ENCODE measurements at regions of chr10 and their contacts with region 1.

Region 1: GRCh38 chr10:94362360-94363250 is at the start of gene NOC3L:
- DNase-seq: peak; percentile 92 to 95 (median 93)
- H3K4me3 ChIP-seq: peak within 1 kb of the TSS; percentile 84
- H3K4me3 Mint-ChIP-seq: peak within 1 kb of the TSS; percentile 94 to 98 (median 96)
- H3K27ac ChIP-seq: peak within 1 kb of the TSS; percentile 71
- H3K27ac Mint-ChIP-seq: peak within 1 kb of the TSS; percentile 93 to 100 (median 98)
- H3K4me1 ChIP-seq: peaks cover 17% of the 10 kb centered on the region
- H3K4me1 Mint-ChIP-seq: peaks cover 32 to 52% (median 46%) of the 10 kb centered on the region in 3 donors
- H3K27me3 ChIP-seq: no peaks in the 10 kb centered on the region
- H3K27me3 Mint-ChIP-seq: peaks cover 2 to 14% of the 10 kb centered on the region in 2 donors
- total RNA-seq, gene NOC3L: 57.2 TPM

Region 2: GRCh38 chr10:93600446-93601145 is 762.0 kb before region 1 on chr10:
- CTCF ChIA-PET with region 1: no interaction called
- POLR2A ChIA-PET with region 1: no interaction called
- DNase-seq: no peak
- H3K4me3 ChIP-seq: no peak overlapping the region
- H3K4me3 Mint-ChIP-seq: no peak overlapping the region
- H3K27ac ChIP-seq: no peak overlapping the region
- H3K27ac Mint-ChIP-seq: no peak overlapping the region
- H3K4me1 ChIP-seq: no peaks in the 10 kb centered on the region
- H3K4me1 Mint-ChIP-seq: peaks cover 0 to 8% (median 0%) of the 10 kb centered on the region in 3 donors
- H3K27me3 ChIP-seq: peaks cover 7% of the 10 kb centered on the region
- H3K27me3 Mint-ChIP-seq: peaks cover 37 to 41% of the 10 kb centered on the region in 2 donors

Region 3: DNA sequence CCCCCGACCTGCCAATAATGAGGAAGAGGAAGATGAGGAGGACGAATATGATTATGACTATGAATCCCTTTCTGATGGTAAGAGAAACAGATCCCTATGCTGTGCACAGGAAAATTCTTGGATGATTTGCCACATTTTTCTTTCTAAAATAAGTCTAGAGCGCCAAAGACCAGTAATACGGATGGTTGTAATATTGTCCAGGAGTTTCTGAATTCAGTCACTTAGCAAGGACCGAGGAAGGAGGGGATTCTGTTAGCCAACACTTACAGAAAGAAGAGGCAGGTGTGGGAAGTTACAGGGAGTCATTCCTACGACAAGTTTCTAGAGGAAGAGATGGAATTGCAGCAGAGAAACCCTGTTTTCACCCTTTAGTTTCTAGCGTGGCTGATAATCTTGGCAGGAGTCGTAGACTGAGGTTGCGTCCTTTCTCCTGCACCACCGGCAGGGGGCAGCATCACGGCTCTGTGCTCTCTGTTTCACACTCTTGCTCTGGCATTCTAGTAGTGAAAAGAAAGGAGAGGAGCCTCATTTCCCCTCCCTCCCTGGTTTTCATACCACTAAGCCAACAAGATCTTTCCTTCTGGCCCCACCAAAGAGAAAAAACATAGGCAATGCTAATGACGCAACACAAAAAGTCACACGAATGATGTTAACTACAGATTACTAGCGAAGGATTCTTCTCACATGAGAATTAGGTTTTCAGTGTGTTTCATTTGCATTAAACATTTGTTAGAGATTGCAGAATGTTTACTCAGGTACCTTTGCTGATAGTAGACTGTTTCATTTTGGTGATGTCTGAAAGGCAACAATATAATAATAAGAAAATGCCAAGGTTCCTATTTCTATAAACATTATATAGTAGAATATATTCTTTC is 82.5 kb before region 1 on chr10:
- CTCF ChIA-PET with region 1: no interaction called
- POLR2A ChIA-PET with region 1: no interaction called
- DNase-seq: peak; percentile 15 to 57 (median 27)
- H3K4me3 ChIP-seq: no peak overlapping the region
- H3K4me3 Mint-ChIP-seq: no peak overlapping the region
- H3K27ac ChIP-seq: no peak overlapping the region
- H3K27ac Mint-ChIP-seq: no peak overlapping the region
- H3K4me1 ChIP-seq: no peaks in the 10 kb centered on the region
- H3K4me1 Mint-ChIP-seq: peaks cover 2 to 8% (median 8%) of the 10 kb centered on the region in 3 donors
- H3K27me3 ChIP-seq: no peaks in the 10 kb centered on the region
- H3K27me3 Mint-ChIP-seq: peaks cover 7 to 8% of the 10 kb centered on the region in 2 donors

Region 4: DNA sequence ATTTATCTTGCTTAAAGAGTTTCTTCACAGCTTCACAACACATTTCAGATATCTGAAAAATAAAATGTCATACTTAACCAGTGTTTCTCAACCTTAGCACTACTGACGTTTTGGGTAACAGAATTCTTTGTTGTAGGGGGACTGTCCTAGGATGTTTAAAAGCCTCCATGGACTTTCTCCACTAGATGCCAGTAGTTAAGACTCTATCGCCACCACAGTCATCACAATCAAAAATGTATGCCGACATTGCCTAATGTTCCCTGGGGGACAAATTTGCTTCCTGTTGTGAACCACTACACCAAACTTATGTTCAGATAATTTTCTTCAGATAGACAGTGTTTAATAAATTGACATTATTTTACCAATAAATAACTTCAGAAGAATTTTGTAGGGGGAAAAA is 13.3 kb before region 1 on chr10:
- CTCF ChIA-PET with region 1: interaction called, 10 read pairs
- POLR2A ChIA-PET with region 1: no interaction called
- DNase-seq: no peak
- H3K4me3 ChIP-seq: no peak overlapping the region
- H3K4me3 Mint-ChIP-seq: no peak overlapping the region
- H3K27ac ChIP-seq: no peak overlapping the region
- H3K27ac Mint-ChIP-seq: no peak overlapping the region
- H3K4me1 ChIP-seq: no peaks in the 10 kb centered on the region
- H3K4me1 Mint-ChIP-seq: peaks cover 0 to 2% (median 0%) of the 10 kb centered on the region in 3 donors
- H3K27me3 ChIP-seq: no peaks in the 10 kb centered on the region
- H3K27me3 Mint-ChIP-seq: no peaks in the 10 kb centered on the region

Measured in CD8-positive, alpha-beta memory T cell (primary cell).